ENCODE measurements at regions of chr13 and their contacts with region 1.

Region 1: DNA sequence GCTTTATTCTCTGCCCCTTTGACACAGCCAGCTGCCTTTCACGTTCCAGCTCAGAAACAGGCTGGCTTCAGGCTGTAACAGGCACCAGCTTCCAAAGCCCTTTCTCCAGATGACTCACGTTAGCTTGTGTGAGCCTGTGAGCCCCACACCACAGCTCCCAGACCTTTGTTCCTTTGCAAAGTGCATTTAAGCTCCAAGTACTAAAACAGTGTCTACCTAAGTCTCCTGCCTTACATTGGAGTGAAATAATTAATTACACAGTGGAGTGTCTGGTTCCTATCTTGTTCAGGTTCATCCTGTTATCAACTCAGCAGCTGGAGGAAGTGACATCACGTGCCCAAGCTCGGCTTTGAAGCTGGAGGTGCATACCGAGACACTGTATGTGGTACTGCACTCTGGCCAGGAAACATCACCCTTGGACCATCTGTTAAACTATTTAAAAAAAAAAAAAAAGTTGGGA is 475.8 kb downstream of the FOXO1 start:
- DNase-seq: peak; percentile 70 to 88 (median 75)
- H3K4me3 ChIP-seq: peak overlapping the region in 1 of 2 donors; percentile 37
- H3K4me3 Mint-ChIP-seq: peak overlapping the region; percentile 11 to 90 (median 83)
- H3K27ac ChIP-seq: peak overlapping the region; percentile 56
- H3K27ac Mint-ChIP-seq: peak overlapping the region; percentile 95 to 98 (median 96)
- H3K4me1 ChIP-seq: peaks cover 68% of the 10 kb centered on the region
- H3K4me1 Mint-ChIP-seq: peaks cover 61 to 79% (median 69%) of the 10 kb centered on the region in 4 donors
- H3K27me3 ChIP-seq: no peaks in the 10 kb centered on the region
- H3K27me3 Mint-ChIP-seq: no peaks in the 10 kb centered on the region

Region 2: DNA sequence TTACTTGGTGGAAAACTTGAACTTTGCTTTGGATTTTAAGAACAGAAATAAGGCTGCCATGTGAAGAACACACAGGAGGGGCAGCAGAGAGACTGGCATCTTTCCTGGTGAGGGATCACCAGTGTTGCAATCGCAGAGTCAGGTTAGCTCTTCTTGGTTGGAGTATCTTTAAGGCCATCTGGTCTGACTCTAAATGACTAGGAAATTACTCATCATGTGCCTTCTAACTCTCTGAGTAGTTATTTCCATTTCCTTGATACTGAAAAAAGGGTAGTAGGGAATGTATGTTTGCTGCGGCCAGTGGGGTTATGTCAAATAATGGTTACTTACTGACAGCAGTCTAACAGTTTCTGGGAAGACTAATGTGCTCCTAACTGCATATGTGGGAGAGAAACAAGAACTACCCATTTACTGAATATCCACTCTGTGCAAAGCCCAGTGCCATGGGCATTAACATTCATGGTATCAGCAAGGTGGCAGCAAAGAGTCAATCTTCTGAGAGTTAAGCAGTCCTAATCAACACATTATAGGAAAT is 413.1 kb before region 1 on chr13:
- CTCF ChIA-PET with region 1: interaction called, 4 read pairs
- POLR2A ChIA-PET with region 1: interaction called, 3 read pairs
- intact Hi-C with region 1: loop called (anchors 2 kb)
- DNase-seq: peak; percentile 28 to 51 (median 37)
- H3K4me3 ChIP-seq: no peak overlapping the region
- H3K4me3 Mint-ChIP-seq: no peak overlapping the region
- H3K27ac ChIP-seq: no peak overlapping the region
- H3K27ac Mint-ChIP-seq: peak overlapping the region in 5 of 7 donors; percentile 22 to 78 (median 62)
- H3K4me1 ChIP-seq: peaks cover 29% of the 10 kb centered on the region
- H3K4me1 Mint-ChIP-seq: peaks cover 25 to 33% (median 29%) of the 10 kb centered on the region in 4 donors
- H3K27me3 ChIP-seq: no peaks in the 10 kb centered on the region
- H3K27me3 Mint-ChIP-seq: no peaks in the 10 kb centered on the region

Region 3: DNA sequence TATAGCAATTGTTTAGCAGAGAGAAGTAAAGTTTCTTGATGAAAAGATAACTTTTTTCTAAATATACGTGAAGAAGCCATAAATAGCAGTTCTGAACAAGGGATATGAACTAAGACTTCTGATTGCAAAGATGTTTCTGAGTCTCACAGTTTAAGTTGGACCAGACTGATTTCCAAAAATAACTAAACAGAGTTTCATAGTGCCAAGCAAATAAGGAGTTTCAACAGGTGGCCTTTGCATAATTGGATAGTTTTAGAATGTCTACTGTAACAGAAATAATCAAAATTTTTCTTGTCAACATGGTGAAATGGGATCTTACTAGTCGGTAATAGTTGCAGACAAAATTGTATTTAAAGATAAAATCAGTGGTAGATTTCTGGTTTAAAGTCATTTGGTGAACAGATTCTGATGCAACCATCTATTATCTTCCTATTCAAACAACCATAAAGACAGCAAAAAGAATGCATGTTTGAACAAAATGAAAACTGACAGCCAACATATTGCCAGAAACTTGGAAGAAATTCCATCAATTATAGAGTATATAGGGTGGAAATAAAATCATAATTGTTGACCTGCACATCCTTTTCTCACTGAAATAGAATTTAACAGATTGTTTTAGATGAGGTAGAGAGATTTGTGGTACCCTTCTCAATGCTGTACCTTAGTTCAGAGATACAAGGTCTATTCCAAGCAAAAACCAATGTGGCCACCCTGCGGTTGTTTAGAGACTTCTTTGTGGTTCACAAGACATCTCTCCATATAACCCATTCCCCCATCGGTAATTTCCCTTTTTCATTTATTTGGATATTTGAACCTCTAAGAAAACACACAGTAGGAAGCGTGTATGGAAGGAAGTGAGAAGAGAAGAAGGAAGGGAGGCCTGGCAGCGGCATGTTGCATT is 259.9 kb before region 1 on chr13:
- CTCF ChIA-PET with region 1: no interaction called
- POLR2A ChIA-PET with region 1: no interaction called
- intact Hi-C with region 1: no loop called
- DNase-seq: no peak
- H3K4me3 ChIP-seq: no peak overlapping the region
- H3K4me3 Mint-ChIP-seq: peak overlapping the region in 1 of 8 donors; percentile 9
- H3K27ac ChIP-seq: no peak overlapping the region
- H3K27ac Mint-ChIP-seq: no peak overlapping the region
- H3K4me1 ChIP-seq: no peaks in the 10 kb centered on the region
- H3K4me1 Mint-ChIP-seq: peaks cover 0 to 13% (median 5%) of the 10 kb centered on the region in 4 donors
- H3K27me3 ChIP-seq: no peaks in the 10 kb centered on the region
- H3K27me3 Mint-ChIP-seq: peaks cover 0 to 3% of the 10 kb centered on the region in 2 donors

Region 4: DNA sequence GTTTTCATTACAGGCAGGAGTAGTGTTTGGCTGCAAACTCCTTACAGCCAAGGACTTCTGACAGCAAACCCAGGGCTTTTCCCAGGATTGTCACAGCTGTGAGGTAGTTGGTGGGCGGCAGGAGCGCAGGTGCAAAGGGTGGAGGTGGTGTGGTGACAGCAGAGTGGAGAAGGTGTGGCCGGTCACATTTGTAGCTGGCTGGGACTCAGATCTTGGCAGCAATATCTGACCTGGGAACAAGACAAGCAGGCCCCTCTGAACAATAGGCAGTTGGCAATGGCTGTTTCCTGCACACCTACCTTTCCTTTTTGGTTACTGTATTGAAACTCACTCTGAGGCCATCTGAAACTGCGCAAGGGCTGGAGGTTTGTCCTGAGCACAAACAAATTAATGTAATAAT is 207.9 kb before region 1 on chr13:
- CTCF ChIA-PET with region 1: no interaction called
- POLR2A ChIA-PET with region 1: no interaction called
- intact Hi-C with region 1: no loop called
- DNase-seq: no peak
- H3K4me3 ChIP-seq: no peak overlapping the region
- H3K4me3 Mint-ChIP-seq: no peak overlapping the region
- H3K27ac ChIP-seq: no peak overlapping the region
- H3K27ac Mint-ChIP-seq: peak overlapping the region in 1 of 7 donors; percentile 48
- H3K4me1 ChIP-seq: no peaks in the 10 kb centered on the region
- H3K4me1 Mint-ChIP-seq: no peaks in the 10 kb centered on the region
- H3K27me3 ChIP-seq: no peaks in the 10 kb centered on the region
- H3K27me3 Mint-ChIP-seq: peaks cover 0 to 5% of the 10 kb centered on the region in 2 donors

Region 5: GRCh38 chr13:40096357-40096901 is 94.2 kb before region 1 on chr13:
- CTCF ChIA-PET with region 1: interaction called, 6 read pairs
- POLR2A ChIA-PET with region 1: interaction called, 4 read pairs
- intact Hi-C with region 1: loop called (anchors 2 kb)
- DNase-seq: peak; percentile 21 to 55 (median 29)
- H3K4me3 ChIP-seq: no peak overlapping the region
- H3K4me3 Mint-ChIP-seq: peak overlapping the region in 1 of 8 donors; percentile 15
- H3K27ac ChIP-seq: no peak overlapping the region
- H3K27ac Mint-ChIP-seq: peak overlapping the region in 5 of 7 donors; percentile 12 to 65 (median 58)
- H3K4me1 ChIP-seq: peaks cover 13% of the 10 kb centered on the region
- H3K4me1 Mint-ChIP-seq: peaks cover 14 to 26% (median 17%) of the 10 kb centered on the region in 4 donors
- H3K27me3 ChIP-seq: no peaks in the 10 kb centered on the region
- H3K27me3 Mint-ChIP-seq: no peaks in the 10 kb centered on the region

Region 6: GRCh38 chr13:40158218-40158617 is 32.5 kb before region 1 on chr13:
- CTCF ChIA-PET with region 1: no interaction called
- POLR2A ChIA-PET with region 1: no interaction called
- intact Hi-C with region 1: no loop called
- DNase-seq: no peak
- H3K4me3 ChIP-seq: no peak overlapping the region
- H3K4me3 Mint-ChIP-seq: no peak overlapping the region
- H3K27ac ChIP-seq: no peak overlapping the region
- H3K27ac Mint-ChIP-seq: no peak overlapping the region
- H3K4me1 ChIP-seq: no peaks in the 10 kb centered on the region
- H3K4me1 Mint-ChIP-seq: peaks cover 4 to 9% (median 7%) of the 10 kb centered on the region in 4 donors
- H3K27me3 ChIP-seq: no peaks in the 10 kb centered on the region
- H3K27me3 Mint-ChIP-seq: no peaks in the 10 kb centered on the region

Region 7: GRCh38 chr13:40206241-40207000 is 15.8 kb after region 1 on chr13:
- CTCF ChIA-PET with region 1: interaction called, 15 read pairs
- POLR2A ChIA-PET with region 1: interaction called, 30 read pairs
- intact Hi-C with region 1: loop called (anchors 1 kb)
- DNase-seq: peak; percentile 56 to 70 (median 65)
- H3K4me3 ChIP-seq: peak overlapping the region in 1 of 2 donors; percentile 21
- H3K4me3 Mint-ChIP-seq: peak overlapping the region; percentile 46 to 89 (median 78)
- H3K27ac ChIP-seq: peak overlapping the region; percentile 53
- H3K27ac Mint-ChIP-seq: peak overlapping the region; percentile 90 to 99 (median 98)
- H3K4me1 ChIP-seq: peaks cover 60% of the 10 kb centered on the region
- H3K4me1 Mint-ChIP-seq: peaks cover 47 to 81% (median 61%) of the 10 kb centered on the region in 4 donors
- H3K27me3 ChIP-seq: no peaks in the 10 kb centered on the region
- H3K27me3 Mint-ChIP-seq: no peaks in the 10 kb centered on the region

Region 8: DNA sequence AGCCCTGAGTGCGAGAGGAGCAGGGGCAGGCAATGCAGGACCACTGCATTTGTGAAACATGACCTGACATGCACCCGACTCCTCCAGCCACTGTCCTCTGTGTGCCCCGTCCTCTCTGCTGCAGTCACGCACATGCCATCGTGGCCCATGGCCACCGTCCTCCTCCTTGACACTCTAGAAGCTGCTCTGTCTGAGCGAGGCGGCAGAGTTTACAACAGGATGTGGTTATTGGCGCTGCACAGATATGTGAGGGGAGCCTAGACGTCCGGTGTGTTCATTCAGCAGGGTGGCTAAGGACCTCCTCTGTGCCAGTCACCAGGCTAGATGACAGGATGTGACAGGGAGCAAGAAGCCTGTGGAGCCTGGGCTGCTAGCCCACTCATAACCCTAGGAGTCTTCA is 197.9 kb after region 1 on chr13:
- CTCF ChIA-PET with region 1: no interaction called
- POLR2A ChIA-PET with region 1: interaction called, 24 read pairs
- intact Hi-C with region 1: loop called (anchors 1 kb)
- DNase-seq: peak; percentile 83 to 93 (median 88)
- H3K4me3 ChIP-seq: peak overlapping the region in 1 of 2 donors; percentile 85
- H3K4me3 Mint-ChIP-seq: peak overlapping the region; percentile 83 to 92 (median 90)
- H3K27ac ChIP-seq: peak overlapping the region; percentile 95
- H3K27ac Mint-ChIP-seq: peak overlapping the region; percentile 89 to 100 (median 99)
- H3K4me1 ChIP-seq: peaks cover 34% of the 10 kb centered on the region
- H3K4me1 Mint-ChIP-seq: peaks cover 31 to 58% (median 39%) of the 10 kb centered on the region in 4 donors
- H3K27me3 ChIP-seq: no peaks in the 10 kb centered on the region
- H3K27me3 Mint-ChIP-seq: no peaks in the 10 kb centered on the region

Region 9: GRCh38 chr13:40613192-40613818 is 422.6 kb after region 1 on chr13:
- CTCF ChIA-PET with region 1: no interaction called
- POLR2A ChIA-PET with region 1: interaction called, 4 read pairs
- intact Hi-C with region 1: loop called (anchors 5 kb)
- DNase-seq: peak; percentile 78 to 85 (median 84)
- H3K4me3 ChIP-seq: peak overlapping the region in 1 of 2 donors; percentile 43
- H3K4me3 Mint-ChIP-seq: peak overlapping the region; percentile 81 to 94 (median 86)
- H3K27ac ChIP-seq: peak overlapping the region; percentile 68
- H3K27ac Mint-ChIP-seq: peak overlapping the region; percentile 89 to 99 (median 95)
- H3K4me1 ChIP-seq: peaks cover 96% of the 10 kb centered on the region
- H3K4me1 Mint-ChIP-seq: peaks cover 68 to 97% (median 88%) of the 10 kb centered on the region in 4 donors
- H3K27me3 ChIP-seq: no peaks in the 10 kb centered on the region
- H3K27me3 Mint-ChIP-seq: no peaks in the 10 kb centered on the region

Measured in CD4-positive, alpha-beta memory T cell (primary cell).